Vagina (tissue), 2 donors: ENCODE measurements at regions of chr13 and their contacts with region 1.

Region 1: GRCh38 chr13:99969919-99970621 is 1.5 kb downstream of the ZIC5 start:
- DNase-seq: no peak
- H3K4me3 ChIP-seq: peak overlapping the region; percentile 14 to 50
- H3K27ac ChIP-seq: no peak overlapping the region
- H3K4me1 ChIP-seq: peaks cover 34% of the 10 kb centered on the region
- H3K27me3 ChIP-seq: peaks cover 52% of the 10 kb centered on the region
- CTCF ChIP-seq: no peak
- POLR2A ChIP-seq: no peak

Region 2: DNA sequence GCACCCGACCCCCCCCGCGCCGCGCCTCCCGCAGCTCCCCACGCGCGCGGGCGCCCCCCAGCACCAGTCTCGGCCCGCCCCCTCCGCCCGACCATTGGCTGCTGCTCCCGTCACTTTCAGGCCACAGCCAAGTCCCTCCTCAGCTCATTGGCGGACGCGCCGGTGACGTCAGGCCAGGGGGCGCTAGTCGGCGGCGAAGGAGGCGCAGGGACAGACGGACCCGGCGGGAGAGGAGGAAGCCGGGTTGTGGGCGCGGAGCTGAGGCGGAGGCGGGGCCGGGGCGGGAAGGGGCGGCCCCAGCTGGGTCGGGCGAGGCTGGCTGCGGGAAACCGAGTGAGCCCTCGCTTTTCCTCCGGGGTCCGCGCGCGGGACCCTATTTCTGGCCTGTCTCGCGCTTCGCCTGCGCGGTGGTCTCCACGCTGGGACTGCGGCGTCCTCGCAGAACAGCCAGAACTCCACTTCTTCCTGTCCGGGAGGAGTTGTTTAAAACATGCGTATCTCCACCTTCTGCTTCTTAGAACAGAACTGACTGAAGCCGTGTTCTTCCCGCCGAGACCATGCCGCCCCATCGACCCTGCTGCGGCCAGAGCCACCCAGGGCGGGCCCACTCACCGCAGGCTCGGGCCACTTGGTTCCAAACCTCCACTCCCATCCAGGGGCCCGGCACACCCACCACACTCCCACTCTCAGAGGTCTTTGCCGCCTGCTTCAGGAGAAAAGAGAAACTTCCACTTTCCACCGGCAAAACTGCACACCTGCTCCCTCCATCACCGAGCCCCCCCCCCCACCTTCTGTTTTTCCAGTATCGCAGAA is 705.0 kb after region 1 on chr13:
- intact Hi-C with region 1: loop called (anchors 10 kb)
- DNase-seq: peak; percentile 99
- H3K4me3 ChIP-seq: peak overlapping the region; percentile 68 to 97
- H3K27ac ChIP-seq: peak overlapping the region; percentile 89
- H3K4me1 ChIP-seq: peaks cover 28% of the 10 kb centered on the region
- H3K27me3 ChIP-seq: no peaks in the 10 kb centered on the region
- CTCF ChIP-seq: peak in 1 of 3 experiments; percentile 30
- POLR2A ChIP-seq: peak in 1 of 2 donors; percentile 45